OCI-LY7 (cell line): ENCODE measurements at regions of chr18 and their contacts with region 1.

Region 1: DNA sequence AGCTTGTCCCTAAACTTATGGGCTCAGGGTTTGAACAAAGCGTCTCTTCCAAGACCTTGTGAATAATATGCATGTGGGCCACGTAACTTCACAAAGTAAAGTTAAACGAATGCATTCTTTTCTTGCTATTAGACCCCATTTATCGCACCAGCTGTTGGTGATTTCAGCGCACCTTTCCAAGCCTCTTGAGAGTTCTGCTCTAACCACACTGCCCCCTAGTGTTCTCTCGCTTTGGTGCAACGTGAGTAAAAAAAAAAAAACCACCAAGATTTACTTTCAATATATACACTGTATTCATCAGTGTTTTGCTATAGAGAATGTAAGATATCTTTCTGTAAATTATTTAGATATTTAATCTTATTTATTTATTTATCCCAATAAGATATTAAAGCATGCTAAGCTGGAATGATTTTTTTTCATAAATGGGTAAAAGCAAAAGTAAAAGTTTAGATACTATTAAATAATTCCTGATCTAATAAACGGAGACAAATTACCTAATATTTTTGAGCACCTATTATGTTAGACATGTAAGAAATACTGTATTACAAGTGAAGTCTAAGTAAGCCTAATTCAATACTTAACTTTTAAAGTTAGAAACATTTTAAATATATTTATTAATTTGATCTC is 459.5 kb downstream of the DLGAP1 start:
- DNase-seq: peak; percentile 85
- H3K4me3 ChIP-seq: no peak overlapping the region
- H3K27ac ChIP-seq: no peak overlapping the region
- H3K4me1 ChIP-seq: peaks cover 5% of the 10 kb centered on the region
- CTCF ChIP-seq: peak; percentile 97

Region 2: GRCh38 chr18:3703732-3704176 is 291.8 kb before region 1 on chr18:
- CTCF ChIA-PET with region 1: no interaction called
- POLR2A ChIA-PET with region 1: no interaction called
- intact Hi-C with region 1: loop called (anchors 2 kb)
- DNase-seq: peak; percentile 65
- H3K4me3 ChIP-seq: no peak overlapping the region
- H3K27ac ChIP-seq: no peak overlapping the region
- H3K4me1 ChIP-seq: peaks cover 5% of the 10 kb centered on the region
- CTCF ChIP-seq: peak; percentile 79

Region 3: DNA sequence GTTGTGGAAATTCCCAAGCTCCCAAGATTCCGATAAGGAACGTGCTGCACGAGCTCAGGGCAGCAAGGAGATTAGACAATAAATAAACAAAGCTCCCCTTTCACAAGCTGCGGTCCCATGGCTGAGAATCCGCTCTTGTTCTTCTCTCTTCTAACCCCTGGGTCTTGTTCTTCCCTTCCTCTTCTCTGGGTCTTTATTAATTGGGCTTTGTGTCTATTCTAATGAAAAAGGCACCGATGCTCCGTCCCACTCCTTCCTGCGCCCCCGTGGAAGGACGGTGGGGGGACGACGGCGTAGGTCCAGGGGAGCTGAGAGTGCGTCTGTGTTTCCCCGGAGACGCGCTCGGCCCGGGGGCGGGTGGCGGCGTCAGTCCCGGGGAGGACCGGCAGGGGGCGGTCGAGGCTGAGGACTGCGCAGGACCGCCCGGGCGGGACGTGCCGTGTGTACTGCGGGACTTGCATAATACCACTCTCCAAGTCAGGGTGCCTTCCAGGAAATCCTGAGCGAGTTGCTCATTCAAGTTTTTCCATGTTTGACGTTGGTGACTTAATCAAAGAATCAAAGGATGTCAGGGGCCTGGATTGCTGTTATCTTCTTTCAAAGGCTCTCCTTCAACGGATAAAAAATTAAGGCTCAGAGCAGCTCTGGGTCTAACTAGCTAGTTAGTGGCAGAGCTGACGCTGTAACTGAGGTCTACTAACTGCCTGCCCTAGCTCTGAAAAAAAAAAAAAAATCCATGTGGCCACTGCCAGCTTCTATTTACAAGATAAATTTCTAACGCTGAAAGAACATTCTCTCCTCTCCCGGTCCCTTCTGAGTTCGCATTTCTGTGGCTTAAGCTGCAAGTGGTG is 224.2 kb before region 1 on chr18:
- CTCF ChIA-PET with region 1: interaction called, 21 read pairs
- POLR2A ChIA-PET with region 1: interaction called, 10 read pairs
- intact Hi-C with region 1: loop called (anchors 1 kb)
- DNase-seq: peak; percentile 86
- H3K4me3 ChIP-seq: peak overlapping the region; percentile 60
- H3K27ac ChIP-seq: no peak overlapping the region
- H3K4me1 ChIP-seq: peaks cover 24% of the 10 kb centered on the region
- CTCF ChIP-seq: peak; percentile 96

Region 4: GRCh38 chr18:3869848-3870247 is 125.7 kb before region 1 on chr18:
- CTCF ChIA-PET with region 1: no interaction called
- POLR2A ChIA-PET with region 1: interaction called, 3 read pairs
- intact Hi-C with region 1: loop called (anchors 2 kb)
- DNase-seq: peak; percentile 56
- H3K4me3 ChIP-seq: no peak overlapping the region
- H3K27ac ChIP-seq: no peak overlapping the region
- H3K4me1 ChIP-seq: peaks cover 7% of the 10 kb centered on the region
- CTCF ChIP-seq: peak; percentile 76

Region 5: GRCh38 chr18:3914833-3915610 is 80.6 kb before region 1 on chr18:
- CTCF ChIA-PET with region 1: no interaction called
- POLR2A ChIA-PET with region 1: no interaction called
- intact Hi-C with region 1: loop called (anchors 1 kb)
- DNase-seq: peak; percentile 91
- H3K4me3 ChIP-seq: peak overlapping the region; percentile 43
- H3K27ac ChIP-seq: peak overlapping the region; percentile 93
- H3K4me1 ChIP-seq: peaks cover 71% of the 10 kb centered on the region
- CTCF ChIP-seq: no peak

Region 6: DNA sequence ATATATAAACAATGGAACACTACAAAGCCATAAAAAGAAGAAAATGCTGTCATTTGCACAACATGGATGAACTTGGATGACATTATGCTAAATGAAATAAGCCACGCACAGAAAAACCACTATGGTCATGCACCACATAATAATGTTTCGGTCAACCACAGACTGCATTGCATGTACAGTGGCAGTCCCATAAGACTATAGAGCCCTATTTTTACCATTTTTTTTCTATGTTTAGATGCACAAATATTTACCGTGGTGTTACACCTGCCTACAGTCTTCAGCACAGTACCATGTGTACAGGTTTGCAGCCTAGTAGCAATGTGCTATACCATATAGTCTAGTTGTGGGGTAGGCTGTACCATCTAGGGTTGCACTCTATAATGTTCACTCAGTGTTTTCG is 16.6 kb before region 1 on chr18:
- CTCF ChIA-PET with region 1: no interaction called
- POLR2A ChIA-PET with region 1: no interaction called
- intact Hi-C with region 1: no loop called
- DNase-seq: no peak
- H3K4me3 ChIP-seq: no peak overlapping the region
- H3K27ac ChIP-seq: no peak overlapping the region
- H3K4me1 ChIP-seq: no peaks in the 10 kb centered on the region
- CTCF ChIP-seq: no peak

Region 7: GRCh38 chr18:4232656-4233055 is 237.1 kb after region 1 on chr18:
- CTCF ChIA-PET with region 1: no interaction called
- POLR2A ChIA-PET with region 1: no interaction called
- intact Hi-C with region 1: no loop called
- DNase-seq: no peak
- H3K4me3 ChIP-seq: no peak overlapping the region
- H3K27ac ChIP-seq: no peak overlapping the region
- H3K4me1 ChIP-seq: no peaks in the 10 kb centered on the region
- CTCF ChIP-seq: no peak